Activated T-helper 1 cell treated with anti-CD3 and anti-CD28 coated beads, Interleukin-12 subunit alpha, Interleukin-12 subunit beta, Interleukin-2, Interleukin-4 antibody, amounts not matched to agents 30 ng/mL and 10 ng/mL and 1 ng/mL, durations not matched to agents 14 hours and 24 hours and 36 hours (primary cell): ENCODE measurements at regions of chr14 and their contacts with region 1.

Region 1: DNA sequence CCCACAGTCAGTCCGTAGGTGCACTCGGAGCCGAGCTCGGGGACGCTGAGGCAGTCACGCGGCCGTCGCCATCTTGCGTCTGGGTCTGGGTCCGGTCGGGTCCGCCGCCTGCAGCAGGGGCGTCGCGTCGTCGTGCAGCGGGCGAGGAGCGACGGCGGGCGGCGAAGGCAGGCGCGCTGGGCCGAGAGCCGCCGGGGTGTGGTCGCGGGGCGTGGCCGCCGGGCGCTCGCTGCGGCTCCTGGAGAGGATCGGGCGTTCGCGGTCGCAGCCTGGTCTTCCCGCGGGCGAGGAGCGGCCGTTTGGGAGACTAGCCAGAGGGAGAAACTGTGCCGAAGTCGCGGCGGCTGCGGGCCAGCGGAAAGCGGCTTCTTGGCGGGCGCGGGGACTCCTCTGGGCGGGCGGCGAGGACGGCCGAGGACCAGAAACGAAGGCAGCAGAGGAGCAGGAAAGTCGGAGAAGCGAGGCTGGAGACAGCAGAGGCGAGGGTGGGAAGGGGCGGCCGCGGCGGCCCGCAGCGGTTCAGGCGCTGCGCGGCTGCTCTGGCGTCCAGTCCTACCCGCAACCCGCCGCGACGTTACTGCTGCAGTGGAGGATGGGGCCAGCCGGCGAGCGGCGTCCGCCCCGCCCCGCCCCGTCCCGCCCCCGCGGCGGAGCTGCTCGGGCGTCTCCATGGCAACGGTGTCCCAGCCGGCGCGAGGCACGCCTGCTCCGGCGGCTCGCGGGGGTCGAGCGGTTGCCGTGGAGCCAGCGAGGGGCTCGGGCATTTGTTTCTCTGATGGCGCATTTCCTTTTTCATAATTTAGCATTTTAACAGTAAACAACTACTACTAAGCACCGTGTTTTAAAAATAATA is at the start of gene PNMA1:
- DNase-seq: peak; percentile 86
- H3K4me3 Mint-ChIP-seq: peak within 1 kb of the TSS; percentile 87
- H3K27ac Mint-ChIP-seq: peak within 1 kb of the TSS; percentile 92
- H3K4me1 Mint-ChIP-seq: peaks cover 30% of the 10 kb centered on the region
- H3K27me3 Mint-ChIP-seq: no peaks in the 10 kb centered on the region
- total RNA-seq, gene PNMA1: 29.7 and 30.6 TPM in 2 replicates

Region 2: DNA sequence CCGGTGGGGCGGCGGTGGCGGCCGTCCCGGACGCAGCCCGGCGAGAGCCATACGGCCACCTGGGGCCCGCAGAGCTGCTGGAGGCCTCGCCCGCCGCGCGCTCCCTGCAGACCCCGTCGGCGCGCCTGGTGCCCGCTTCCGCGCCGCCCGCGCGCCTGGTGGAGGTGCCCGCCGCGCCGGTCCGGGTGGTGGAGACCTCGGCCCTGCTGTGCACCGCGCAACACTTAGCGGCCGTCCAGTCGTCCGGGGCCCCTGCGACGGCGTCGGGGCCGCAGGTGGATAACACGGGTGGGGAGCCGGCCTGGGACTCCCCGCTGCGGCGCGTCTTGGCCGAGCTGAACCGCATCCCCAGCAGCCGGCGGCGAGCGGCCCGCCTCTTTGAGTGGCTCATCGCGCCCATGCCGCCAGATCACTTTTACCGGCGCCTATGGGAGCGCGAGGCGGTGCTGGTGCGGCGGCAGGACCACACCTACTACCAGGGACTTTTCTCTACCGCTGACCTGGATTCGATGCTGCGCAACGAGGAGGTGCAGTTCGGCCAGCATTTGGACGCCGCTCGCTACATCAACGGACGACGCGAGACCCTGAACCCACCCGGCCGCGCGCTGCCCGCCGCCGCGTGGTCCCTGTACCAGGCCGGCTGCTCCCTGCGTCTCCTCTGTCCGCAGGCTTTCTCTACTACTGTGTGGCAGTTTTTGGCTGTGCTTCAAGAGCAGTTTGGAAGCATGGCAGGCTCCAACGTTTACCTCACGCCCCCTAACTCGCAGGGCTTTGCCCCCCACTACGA is 222.6 kb before region 1 on chr14:
- intact Hi-C with region 1: loop called (anchors 1 kb)
- DNase-seq: peak; percentile 75
- H3K4me3 Mint-ChIP-seq: peak overlapping the region; percentile 86
- H3K27ac Mint-ChIP-seq: peak overlapping the region; percentile 86
- H3K4me1 Mint-ChIP-seq: peaks cover 52% of the 10 kb centered on the region
- H3K27me3 Mint-ChIP-seq: peaks cover 5% of the 10 kb centered on the region

Region 3: DNA sequence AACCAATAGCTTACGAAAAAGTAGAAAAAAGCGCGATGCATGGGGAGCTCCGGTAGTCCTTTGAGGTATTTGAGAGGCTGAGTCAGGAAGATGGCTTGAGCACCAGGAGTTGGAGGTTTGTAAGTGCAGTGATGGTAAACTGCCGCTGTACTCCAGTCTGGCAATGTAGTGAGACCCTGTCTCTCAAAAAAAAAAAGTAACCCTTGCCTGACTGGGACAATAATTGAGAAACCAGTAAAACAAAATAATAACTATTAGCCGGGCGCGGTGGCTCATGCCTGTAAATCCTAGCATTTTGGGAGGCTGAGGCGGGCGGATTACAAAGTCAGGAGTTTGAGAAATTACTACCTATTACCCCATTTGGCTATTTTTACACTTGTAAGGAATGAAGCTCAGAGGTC is 145.6 kb before region 1 on chr14:
- intact Hi-C with region 1: loop called (anchors 5 kb)
- DNase-seq: no peak
- H3K4me3 Mint-ChIP-seq: peak overlapping the region; percentile 92
- H3K27ac Mint-ChIP-seq: peak overlapping the region; percentile 97
- H3K4me1 Mint-ChIP-seq: peaks cover 39% of the 10 kb centered on the region
- H3K27me3 Mint-ChIP-seq: no peaks in the 10 kb centered on the region

Region 4: DNA sequence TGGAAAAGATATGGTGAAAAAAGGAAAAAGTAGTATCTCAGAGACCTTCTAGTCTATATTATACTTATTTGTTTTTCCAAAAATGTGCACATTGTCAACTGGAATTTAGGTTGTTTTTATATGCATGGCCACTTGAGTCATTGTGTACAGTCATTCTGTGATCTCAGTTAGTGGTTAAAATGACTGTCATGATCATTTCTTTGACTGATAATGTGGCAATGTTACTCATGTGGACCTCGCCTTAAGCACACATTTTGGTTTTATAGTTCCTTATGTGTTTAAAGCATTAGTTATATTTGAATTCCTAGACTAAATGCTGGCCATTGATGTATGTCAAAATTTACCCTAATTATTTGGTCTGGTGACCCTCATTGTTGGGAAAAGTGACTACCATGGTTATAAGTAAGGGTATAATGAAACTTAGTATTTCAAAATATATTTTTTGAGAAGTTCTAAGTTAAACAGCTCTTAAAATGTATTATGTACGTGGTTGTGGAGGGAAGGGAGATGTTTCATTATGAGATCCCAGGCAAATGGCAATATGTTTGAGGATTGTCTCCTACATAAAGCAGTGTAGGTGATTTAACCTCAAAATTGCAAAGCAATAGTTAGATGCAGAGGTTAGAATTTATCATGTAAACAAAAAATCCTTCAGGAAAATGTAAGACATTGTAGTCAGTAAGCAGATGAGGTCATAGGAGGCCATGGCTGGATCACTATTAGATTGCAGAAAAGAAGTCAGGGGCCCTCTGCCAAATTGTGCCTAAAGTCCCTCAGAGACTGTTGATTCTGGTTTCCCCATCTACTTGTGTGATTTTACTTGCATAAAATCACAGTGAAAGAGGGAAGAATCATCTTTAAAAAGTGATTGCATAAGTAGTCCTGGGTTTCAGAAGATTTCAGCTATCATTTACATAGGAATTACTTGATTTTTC is 17.3 kb before region 1 on chr14:
- intact Hi-C with region 1: loop called (anchors 1 kb)
- DNase-seq: no peak
- H3K4me3 Mint-ChIP-seq: peak overlapping the region; percentile 64
- H3K27ac Mint-ChIP-seq: peak overlapping the region; percentile 78
- H3K4me1 Mint-ChIP-seq: peaks cover 41% of the 10 kb centered on the region
- H3K27me3 Mint-ChIP-seq: no peaks in the 10 kb centered on the region

Region 5: DNA sequence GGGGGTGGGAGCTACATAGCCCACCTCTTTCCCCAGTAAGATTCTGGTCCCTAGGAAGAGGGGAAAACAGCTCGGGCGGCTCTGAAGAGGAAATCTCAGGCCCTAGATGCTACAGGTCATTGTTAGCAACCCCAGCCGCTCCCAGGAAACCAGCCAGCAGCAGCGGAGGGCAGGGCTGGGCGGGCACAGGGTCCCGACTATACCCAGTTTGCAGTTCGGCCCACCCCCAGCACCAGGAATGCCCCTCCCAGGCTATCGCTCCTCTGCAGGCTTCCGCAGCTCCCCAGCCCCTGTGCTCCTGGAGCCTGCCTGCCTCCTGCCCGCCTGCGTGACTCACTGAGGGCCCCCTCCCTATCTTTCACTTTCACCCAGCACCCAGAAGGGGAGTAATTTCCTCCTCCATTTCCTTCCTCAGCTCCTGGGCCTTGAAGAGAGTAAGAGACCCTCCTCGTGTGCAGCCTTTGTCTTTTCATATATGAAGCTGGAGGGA is 27.4 kb after region 1 on chr14:
- intact Hi-C with region 1: loop called (anchors 1 kb)
- DNase-seq: peak; percentile 61
- H3K4me3 Mint-ChIP-seq: peak overlapping the region; percentile 83
- H3K27ac Mint-ChIP-seq: peak overlapping the region; percentile 86
- H3K4me1 Mint-ChIP-seq: peaks cover 62% of the 10 kb centered on the region
- H3K27me3 Mint-ChIP-seq: no peaks in the 10 kb centered on the region

Region 6: GRCh38 chr14:74018586-74019407 is 304.8 kb after region 1 on chr14 and contains the starts of genes BBOF1 and ENTPD5:
- intact Hi-C with region 1: loop called (anchors 5 kb)
- DNase-seq: peak; percentile 85
- H3K4me3 Mint-ChIP-seq: peak within 1 kb of the TSS; percentile 95
- H3K27ac Mint-ChIP-seq: peak within 1 kb of the TSS; percentile 97
- H3K4me1 Mint-ChIP-seq: peaks cover 17% of the 10 kb centered on the region
- H3K27me3 Mint-ChIP-seq: peaks cover 3% of the 10 kb centered on the region
- total RNA-seq, gene BBOF1: 0.51 and 0.88 TPM in 2 replicates
- total RNA-seq, gene ENTPD5: 10.7 and 12.2 TPM in 2 replicates